ENCODE measurements at regions of chr2 and their contacts with region 1.

Region 1: DNA sequence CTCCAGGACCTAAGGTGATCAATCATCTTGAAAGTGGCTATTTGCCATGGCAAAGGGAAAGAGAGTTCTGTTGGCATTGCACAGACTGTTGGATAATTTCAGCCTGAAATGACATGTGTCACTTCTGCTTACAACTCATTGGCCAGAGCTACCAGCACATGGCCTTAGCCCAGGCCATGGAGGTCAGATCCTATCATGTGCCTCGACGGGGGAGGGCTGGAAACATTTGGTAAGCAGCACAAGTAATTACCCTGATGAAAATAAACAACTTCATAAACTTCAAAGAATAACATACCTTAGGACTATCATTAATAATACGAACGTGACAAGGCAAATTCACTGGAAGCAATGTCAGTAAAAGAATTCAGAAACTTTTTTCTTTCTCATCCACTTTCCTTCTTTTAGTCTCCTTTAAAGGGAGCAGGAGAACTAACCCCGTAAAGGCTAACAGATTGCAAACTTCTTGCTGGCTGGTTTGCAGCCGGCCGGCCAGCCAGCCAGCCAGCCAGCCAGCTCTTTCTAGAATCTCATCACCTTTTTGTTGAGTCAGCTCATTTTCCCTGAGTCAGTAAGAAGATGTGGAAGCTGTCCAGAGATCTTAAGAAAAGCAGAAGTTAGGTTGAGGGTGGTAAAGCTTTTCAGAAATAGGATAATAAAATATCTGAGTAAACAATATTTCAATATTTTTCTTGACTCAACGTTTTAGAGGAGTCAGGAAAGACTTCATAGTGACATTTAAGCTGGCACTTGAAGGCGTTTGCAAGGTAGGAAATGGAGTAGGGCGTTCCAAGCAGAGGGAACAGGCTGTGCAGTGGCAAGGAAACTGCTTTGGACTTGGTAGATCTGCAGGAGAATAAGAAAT is 31.9 kb downstream of the CNRIP1 start:
- DNase-seq: no peak
- ATAC-seq: no peak
- H3K4me3 ChIP-seq: no peak overlapping the region
- H3K27ac ChIP-seq: no peak overlapping the region
- H3K4me1 ChIP-seq: no peaks in the 10 kb centered on the region
- H3K27me3 ChIP-seq: peaks cover 2% of the 10 kb centered on the region; the same call in 1 of the 2 replicates
- CTCF ChIP-seq: no peak

Region 2: GRCh38 chr2:68263632-68264031 is 24.2 kb before region 1 on chr2:
- CTCF ChIA-PET with region 1: no interaction called
- POLR2A ChIA-PET with region 1: interaction called, 10 read pairs
- in situ Hi-C with region 1: no loop called
- intact Hi-C with region 1: no loop called
- DNase-seq: no peak
- ATAC-seq: no peak
- H3K4me3 ChIP-seq: no peak overlapping the region
- H3K27ac ChIP-seq: no peak overlapping the region
- H3K4me1 ChIP-seq: no peaks in the 10 kb centered on the region
- H3K27me3 ChIP-seq: peaks cover 6% of the 10 kb centered on the region; the same call in 1 of the 2 replicates
- CTCF ChIP-seq: no peak

Region 3: DNA sequence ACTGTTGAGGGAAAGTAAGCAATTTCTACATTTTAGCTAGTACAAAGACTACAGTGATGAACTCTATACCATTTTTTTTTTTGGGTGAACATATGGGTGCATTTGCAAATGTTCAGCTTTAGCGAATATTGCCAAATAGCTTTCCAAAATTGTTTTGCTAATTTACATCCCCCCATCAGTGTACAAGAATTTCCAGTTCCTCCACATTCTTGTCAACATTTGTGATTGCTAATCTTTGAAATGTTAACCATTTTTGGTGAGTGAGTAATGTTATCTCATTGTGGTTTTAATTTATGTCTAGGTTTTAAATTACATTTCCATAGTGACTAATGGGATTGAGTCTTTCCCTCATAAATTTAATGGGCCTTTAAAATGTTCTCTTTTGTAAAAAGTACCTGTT is 48.4 kb after region 1 on chr2:
- CTCF ChIA-PET with region 1: interaction called, 13 read pairs
- POLR2A ChIA-PET with region 1: no interaction called
- in situ Hi-C with region 1: no loop called
- intact Hi-C with region 1: no loop called
- DNase-seq: no peak
- ATAC-seq: no peak
- H3K4me3 ChIP-seq: no peak overlapping the region
- H3K27ac ChIP-seq: no peak overlapping the region
- H3K4me1 ChIP-seq: no peaks in the 10 kb centered on the region
- H3K27me3 ChIP-seq: peaks cover 12% of the 10 kb centered on the region
- CTCF ChIP-seq: no peak

Region 4: GRCh38 chr2:68411397-68412126 is 123.8 kb after region 1 on chr2:
- CTCF ChIA-PET with region 1: interaction called, 11 read pairs
- POLR2A ChIA-PET with region 1: no interaction called
- in situ Hi-C with region 1: no loop called
- intact Hi-C with region 1: no loop called
- DNase-seq: no peak
- ATAC-seq: no peak
- H3K4me3 ChIP-seq: no peak overlapping the region
- H3K27ac ChIP-seq: no peak overlapping the region
- H3K4me1 ChIP-seq: no peaks in the 10 kb centered on the region
- H3K27me3 ChIP-seq: 0 out of 2 replicates have a peak, but pooled peaks cover 2% of the 10 kb centered on the region
- CTCF ChIP-seq: no peak

Region 5: GRCh38 chr2:68662466-68662865 is 374.7 kb after region 1 on chr2:
- CTCF ChIA-PET with region 1: no interaction called
- POLR2A ChIA-PET with region 1: no interaction called
- in situ Hi-C with region 1: no loop called
- intact Hi-C with region 1: no loop called
- DNase-seq: no peak
- ATAC-seq: no peak
- H3K4me3 ChIP-seq: no peak overlapping the region
- H3K27ac ChIP-seq: no peak overlapping the region
- H3K4me1 ChIP-seq: no peaks in the 10 kb centered on the region
- H3K27me3 ChIP-seq: peaks cover 23% of the 10 kb centered on the region
- CTCF ChIP-seq: no peak